Left colon (tissue), 2 donors: ENCODE measurements at regions of chr18 and their contacts with region 1.

Region 1: GRCh38 chr18:68660354-68661183 is 54.3 kb downstream of the TMX3 start:
- DNase-seq: no peak
- ATAC-seq: no peak

Region 2: GRCh38 chr18:67217551-67218166 is 1442.9 kb before region 1 on chr18:
- intact Hi-C with region 1: loop called in 1 of 2 experiments (anchors 10 kb)
- DNase-seq: peak in 1 of 2 donors; percentile 25
- ATAC-seq: peak; percentile 61

Region 3: GRCh38 chr18:68354176-68354575 is 306.4 kb before region 1 on chr18:
- intact Hi-C with region 1: no loop called
- DNase-seq: no peak
- ATAC-seq: no peak

Region 4: GRCh38 chr18:68714609-68715496 is 54.3 kb after region 1 on chr18 and contains the start of gene TMX3:
- intact Hi-C with region 1: no loop called
- DNase-seq: peak; percentile 91 to 95
- ATAC-seq: peak; percentile 99
- total RNA-seq, gene TMX3: 26.4 to 32.6 TPM